CD8-positive, alpha-beta memory T cell (primary cell): ENCODE measurements at regions of chr22 and their contacts with region 1.

Region 1: DNA sequence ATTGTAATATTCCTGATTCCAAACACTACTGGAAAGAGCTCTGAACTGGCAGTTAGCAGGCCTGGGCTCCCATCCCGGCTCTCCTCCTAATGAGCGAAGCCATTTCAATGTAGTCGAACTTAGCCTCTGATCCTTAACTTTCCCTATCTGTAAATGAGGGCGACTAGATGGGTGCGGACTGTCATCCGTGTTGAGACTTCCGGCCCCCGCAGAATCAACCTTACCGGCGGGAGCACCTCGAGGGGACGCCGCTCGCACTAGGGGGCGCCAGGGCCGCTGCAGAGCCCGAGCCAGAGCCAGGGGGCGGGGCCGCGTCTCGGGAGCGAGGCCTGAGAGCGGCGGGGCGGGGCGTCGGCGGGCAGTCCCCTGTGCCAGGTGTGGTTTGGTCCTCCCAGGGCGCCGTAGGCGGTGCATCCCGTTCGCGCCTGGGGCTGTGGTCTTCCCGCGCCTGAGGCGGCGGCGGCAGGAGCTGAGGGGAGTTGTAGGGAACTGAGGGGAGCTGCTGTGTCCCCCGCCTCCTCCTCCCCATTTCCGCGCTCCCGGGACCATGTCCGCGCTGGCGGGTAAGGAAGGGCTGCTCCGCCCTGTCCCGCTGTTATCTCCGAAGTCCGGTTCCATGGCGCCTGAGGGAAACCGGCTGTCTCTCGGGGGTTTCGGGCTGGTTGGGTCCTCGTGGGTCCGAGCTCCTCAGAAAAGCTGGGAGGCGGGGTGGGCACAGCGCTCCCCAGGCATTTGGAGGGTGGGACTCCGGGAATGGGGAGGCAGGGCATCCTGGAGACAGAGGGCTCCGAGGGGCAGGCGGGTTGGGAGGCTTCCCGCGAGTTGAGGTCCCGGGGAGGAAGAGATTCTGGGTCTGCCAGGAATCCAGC is at the start of gene LIMK2:
- DNase-seq: peak; percentile 95 to 99 (median 97)
- H3K4me3 ChIP-seq: peak within 1 kb of the TSS; percentile 93
- H3K4me3 Mint-ChIP-seq: peak within 1 kb of the TSS; percentile 82 to 96 (median 87)
- H3K27ac ChIP-seq: peak within 1 kb of the TSS; percentile 69
- H3K27ac Mint-ChIP-seq: peak within 1 kb of the TSS; percentile 89 to 96 (median 93)
- H3K4me1 ChIP-seq: peaks cover 32% of the 10 kb centered on the region
- H3K4me1 Mint-ChIP-seq: peaks cover 42 to 59% (median 49%) of the 10 kb centered on the region in 3 donors
- H3K27me3 ChIP-seq: no peaks in the 10 kb centered on the region
- H3K27me3 Mint-ChIP-seq: no peaks in the 10 kb centered on the region
- total RNA-seq, gene LIMK2: 25.1 to 27.7 TPM

Region 2: GRCh38 chr22:31223786-31224191 is 11.7 kb after region 1 on chr22:
- CTCF ChIA-PET with region 1: interaction called, 39 read pairs
- POLR2A ChIA-PET with region 1: no interaction called
- DNase-seq: no peak
- H3K4me3 ChIP-seq: no peak overlapping the region
- H3K4me3 Mint-ChIP-seq: no peak overlapping the region
- H3K27ac ChIP-seq: no peak overlapping the region
- H3K27ac Mint-ChIP-seq: peak overlapping the region in 3 of 8 donors; percentile 11 to 84 (median 32)
- H3K4me1 ChIP-seq: peaks cover 4% of the 10 kb centered on the region
- H3K4me1 Mint-ChIP-seq: peaks cover 17 to 41% (median 38%) of the 10 kb centered on the region in 3 donors
- H3K27me3 ChIP-seq: no peaks in the 10 kb centered on the region
- H3K27me3 Mint-ChIP-seq: no peaks in the 10 kb centered on the region

Region 3: DNA sequence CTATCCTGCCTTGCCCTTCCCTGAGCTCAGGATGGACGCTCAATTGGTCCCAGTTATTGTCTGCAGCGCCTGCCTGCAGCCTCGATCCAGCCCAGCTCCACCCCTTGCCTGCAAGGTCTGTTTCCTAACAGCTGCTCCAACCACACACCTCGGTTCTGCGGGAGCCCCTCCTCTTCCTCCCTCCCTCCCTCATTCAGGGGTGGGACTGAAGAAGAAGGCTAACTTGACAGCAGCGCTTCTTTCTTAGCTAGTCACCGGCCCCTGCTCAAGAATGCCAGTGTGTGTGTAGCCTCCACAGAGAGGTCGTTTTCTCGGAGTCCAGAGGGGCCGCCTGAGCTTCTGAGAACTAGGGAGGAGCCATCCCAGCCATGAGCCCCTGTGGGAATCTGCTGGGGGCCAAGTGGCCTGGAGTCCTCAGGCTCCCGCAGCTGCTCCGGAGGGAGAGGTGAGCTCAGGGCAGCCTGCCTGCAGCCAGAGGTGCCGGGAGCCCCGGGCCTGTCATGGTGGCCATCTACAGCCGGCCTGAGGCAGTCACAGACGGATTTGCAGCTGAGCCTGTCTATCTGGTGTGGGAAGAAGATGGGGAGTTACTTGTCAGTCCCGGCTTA is 36.1 kb after region 1 on chr22:
- CTCF ChIA-PET with region 1: interaction called, 23 read pairs
- POLR2A ChIA-PET with region 1: no interaction called
- DNase-seq: peak; percentile 40 to 75 (median 47)
- H3K4me3 ChIP-seq: peak overlapping the region; percentile 30
- H3K4me3 Mint-ChIP-seq: peak overlapping the region in 6 of 7 donors; percentile 60 to 86 (median 74)
- H3K27ac ChIP-seq: no peak overlapping the region
- H3K27ac Mint-ChIP-seq: peak overlapping the region in 6 of 8 donors; percentile 1 to 74 (median 48)
- H3K4me1 ChIP-seq: peaks cover 14% of the 10 kb centered on the region
- H3K4me1 Mint-ChIP-seq: peaks cover 15 to 47% (median 31%) of the 10 kb centered on the region in 3 donors
- H3K27me3 ChIP-seq: no peaks in the 10 kb centered on the region
- H3K27me3 Mint-ChIP-seq: no peaks in the 10 kb centered on the region

Region 4: GRCh38 chr22:31290494-31291471 is 78.7 kb after region 1 on chr22:
- CTCF ChIA-PET with region 1: interaction called, 14 read pairs
- POLR2A ChIA-PET with region 1: interaction called, 17 read pairs
- DNase-seq: peak; percentile 93 to 98 (median 97)
- H3K4me3 ChIP-seq: peak overlapping the region; percentile 93
- H3K4me3 Mint-ChIP-seq: peak overlapping the region; percentile 98 to 100 (median 99)
- H3K27ac ChIP-seq: peak overlapping the region; percentile 98
- H3K27ac Mint-ChIP-seq: peak overlapping the region; percentile 98 to 100 (median 100)
- H3K4me1 ChIP-seq: peaks cover 59% of the 10 kb centered on the region
- H3K4me1 Mint-ChIP-seq: peaks cover 62 to 78% (median 72%) of the 10 kb centered on the region in 3 donors
- H3K27me3 ChIP-seq: no peaks in the 10 kb centered on the region
- H3K27me3 Mint-ChIP-seq: peaks cover 0 to 15% of the 10 kb centered on the region in 2 donors

Region 5: GRCh38 chr22:31378123-31378522 is 166.0 kb after region 1 on chr22:
- CTCF ChIA-PET with region 1: no interaction called
- POLR2A ChIA-PET with region 1: no interaction called
- DNase-seq: no peak
- H3K4me3 ChIP-seq: no peak overlapping the region
- H3K4me3 Mint-ChIP-seq: no peak overlapping the region
- H3K27ac ChIP-seq: no peak overlapping the region
- H3K27ac Mint-ChIP-seq: peak overlapping the region in 2 of 8 donors; percentile 41 to 47
- H3K4me1 ChIP-seq: no peaks in the 10 kb centered on the region
- H3K4me1 Mint-ChIP-seq: no peaks in the 10 kb centered on the region
- H3K27me3 ChIP-seq: no peaks in the 10 kb centered on the region
- H3K27me3 Mint-ChIP-seq: peaks cover 0 to 3% of the 10 kb centered on the region in 2 donors